ENCODE measurements at regions of chr5 and their contacts with region 1.

Region 1: GRCh38 chr5:88729084-88729828 is 153.7 kb downstream of the MEF2C start:
- DNase-seq: peak; percentile 45 to 55 (median 50)
- H3K4me3 ChIP-seq: no peak overlapping the region
- H3K4me3 Mint-ChIP-seq: no peak overlapping the region
- H3K27ac ChIP-seq: no peak overlapping the region
- H3K27ac Mint-ChIP-seq: no peak overlapping the region
- H3K4me1 ChIP-seq: no peaks in the 10 kb centered on the region
- H3K4me1 Mint-ChIP-seq: peaks cover 3 to 4% (median 4%) of the 10 kb centered on the region in 4 donors
- H3K27me3 ChIP-seq: no peaks in the 10 kb centered on the region
- H3K27me3 Mint-ChIP-seq: peaks cover 8 to 12% of the 10 kb centered on the region in 2 donors

Region 2: GRCh38 chr5:88656221-88656935 is 72.9 kb before region 1 on chr5:
- CTCF ChIA-PET with region 1: no interaction called
- POLR2A ChIA-PET with region 1: no interaction called
- intact Hi-C with region 1: no loop called
- DNase-seq: no peak
- H3K4me3 ChIP-seq: no peak overlapping the region
- H3K4me3 Mint-ChIP-seq: no peak overlapping the region
- H3K27ac ChIP-seq: no peak overlapping the region
- H3K27ac Mint-ChIP-seq: no peak overlapping the region
- H3K4me1 ChIP-seq: peaks cover 9% of the 10 kb centered on the region
- H3K4me1 Mint-ChIP-seq: peaks cover 5 to 16% (median 10%) of the 10 kb centered on the region in 4 donors
- H3K27me3 ChIP-seq: peaks cover 24% of the 10 kb centered on the region
- H3K27me3 Mint-ChIP-seq: peaks cover 29 to 30% of the 10 kb centered on the region in 2 donors

Region 3: GRCh38 chr5:88713818-88714217 is 15.4 kb before region 1 on chr5:
- CTCF ChIA-PET with region 1: interaction called, 12 read pairs
- POLR2A ChIA-PET with region 1: no interaction called
- intact Hi-C with region 1: no loop called
- DNase-seq: no peak
- H3K4me3 ChIP-seq: no peak overlapping the region
- H3K4me3 Mint-ChIP-seq: no peak overlapping the region
- H3K27ac ChIP-seq: no peak overlapping the region
- H3K27ac Mint-ChIP-seq: no peak overlapping the region
- H3K4me1 ChIP-seq: no peaks in the 10 kb centered on the region
- H3K4me1 Mint-ChIP-seq: no peaks in the 10 kb centered on the region
- H3K27me3 ChIP-seq: no peaks in the 10 kb centered on the region
- H3K27me3 Mint-ChIP-seq: peaks cover 7 to 12% of the 10 kb centered on the region in 2 donors

Region 4: GRCh38 chr5:88746438-88746882 is 17.2 kb after region 1 on chr5:
- CTCF ChIA-PET with region 1: interaction called, 63 read pairs
- POLR2A ChIA-PET with region 1: no interaction called
- intact Hi-C with region 1: no loop called
- DNase-seq: no peak
- H3K4me3 ChIP-seq: no peak overlapping the region
- H3K4me3 Mint-ChIP-seq: no peak overlapping the region
- H3K27ac ChIP-seq: no peak overlapping the region
- H3K27ac Mint-ChIP-seq: no peak overlapping the region
- H3K4me1 ChIP-seq: peaks cover 2% of the 10 kb centered on the region
- H3K4me1 Mint-ChIP-seq: peaks cover 2 to 4% (median 2%) of the 10 kb centered on the region in 4 donors
- H3K27me3 ChIP-seq: no peaks in the 10 kb centered on the region
- H3K27me3 Mint-ChIP-seq: peaks cover 1 to 4% of the 10 kb centered on the region in 2 donors

Region 5: DNA sequence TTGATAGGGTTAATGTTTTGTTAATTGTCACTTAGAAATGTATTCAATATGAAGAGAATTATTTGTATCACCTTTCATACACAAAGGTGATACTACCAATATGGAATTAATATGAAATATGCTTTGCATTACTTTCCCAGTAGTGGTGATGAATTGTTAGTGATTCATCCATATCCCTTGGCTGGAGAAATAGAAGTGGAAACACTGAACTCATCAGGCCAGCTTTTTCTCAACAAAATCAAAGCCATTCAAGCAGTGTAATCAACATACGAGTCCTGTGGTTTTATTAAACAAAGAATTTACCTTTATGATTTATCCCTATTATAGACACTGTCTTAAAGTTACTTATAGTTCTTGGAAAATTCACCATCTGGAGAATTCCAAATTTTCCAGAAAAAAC is 417.8 kb after region 1 on chr5:
- CTCF ChIA-PET with region 1: no interaction called
- POLR2A ChIA-PET with region 1: no interaction called
- intact Hi-C with region 1: no loop called
- DNase-seq: no peak
- H3K4me3 ChIP-seq: no peak overlapping the region
- H3K4me3 Mint-ChIP-seq: no peak overlapping the region
- H3K27ac ChIP-seq: no peak overlapping the region
- H3K27ac Mint-ChIP-seq: no peak overlapping the region
- H3K4me1 ChIP-seq: no peaks in the 10 kb centered on the region
- H3K4me1 Mint-ChIP-seq: no peaks in the 10 kb centered on the region
- H3K27me3 ChIP-seq: no peaks in the 10 kb centered on the region
- H3K27me3 Mint-ChIP-seq: no peaks in the 10 kb centered on the region

Region 6: DNA sequence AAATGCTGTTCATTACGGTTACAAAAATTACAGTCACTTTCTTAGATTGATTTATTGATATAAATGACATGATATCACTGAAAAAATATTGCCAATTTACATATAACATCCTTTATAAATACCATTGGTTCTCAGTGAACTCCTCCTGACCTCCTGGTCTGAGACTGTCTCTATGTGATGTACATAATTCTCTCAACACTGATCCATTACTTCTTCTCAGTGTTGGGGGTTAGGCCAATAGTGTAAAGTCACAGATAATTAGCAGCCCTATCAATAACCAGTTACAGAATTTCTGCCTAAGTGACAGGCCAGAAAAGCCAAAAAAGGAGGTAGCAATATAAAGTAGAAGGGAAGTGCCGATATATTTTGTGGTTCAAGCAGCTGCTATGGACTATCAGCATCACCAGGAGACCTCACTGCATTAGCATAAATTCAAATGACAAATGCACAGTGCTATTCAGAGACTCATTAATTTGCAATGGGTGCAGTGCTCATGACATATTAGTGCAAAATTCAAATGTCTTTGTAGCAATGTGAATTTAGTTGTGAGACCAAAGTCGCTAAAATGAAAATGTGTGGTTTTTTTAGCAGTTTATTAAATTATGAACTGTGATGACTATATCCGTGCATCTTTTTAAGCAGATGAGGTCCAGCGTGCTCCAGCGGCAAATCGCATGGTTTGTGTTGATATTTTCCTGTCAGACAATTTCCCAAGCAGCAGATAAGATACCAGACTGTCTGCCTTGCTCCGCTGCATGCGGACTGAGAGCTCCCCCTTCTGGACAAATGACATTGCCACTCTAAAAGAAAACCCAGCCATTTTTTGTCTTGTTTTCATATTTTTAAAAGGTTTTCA is 1535.7 kb after region 1 on chr5:
- CTCF ChIA-PET with region 1: interaction called, 39 read pairs
- POLR2A ChIA-PET with region 1: no interaction called
- intact Hi-C with region 1: no loop called
- DNase-seq: peak; percentile 19 to 44 (median 27)
- H3K4me3 ChIP-seq: no peak overlapping the region
- H3K4me3 Mint-ChIP-seq: peak overlapping the region in 1 of 8 donors; percentile 29
- H3K27ac ChIP-seq: no peak overlapping the region
- H3K27ac Mint-ChIP-seq: no peak overlapping the region
- H3K4me1 ChIP-seq: no peaks in the 10 kb centered on the region
- H3K4me1 Mint-ChIP-seq: peaks cover 0 to 2% (median under 1%) of the 10 kb centered on the region in 4 donors
- H3K27me3 ChIP-seq: no peaks in the 10 kb centered on the region
- H3K27me3 Mint-ChIP-seq: peaks cover 4 to 6% of the 10 kb centered on the region in 2 donors

Region 7: DNA sequence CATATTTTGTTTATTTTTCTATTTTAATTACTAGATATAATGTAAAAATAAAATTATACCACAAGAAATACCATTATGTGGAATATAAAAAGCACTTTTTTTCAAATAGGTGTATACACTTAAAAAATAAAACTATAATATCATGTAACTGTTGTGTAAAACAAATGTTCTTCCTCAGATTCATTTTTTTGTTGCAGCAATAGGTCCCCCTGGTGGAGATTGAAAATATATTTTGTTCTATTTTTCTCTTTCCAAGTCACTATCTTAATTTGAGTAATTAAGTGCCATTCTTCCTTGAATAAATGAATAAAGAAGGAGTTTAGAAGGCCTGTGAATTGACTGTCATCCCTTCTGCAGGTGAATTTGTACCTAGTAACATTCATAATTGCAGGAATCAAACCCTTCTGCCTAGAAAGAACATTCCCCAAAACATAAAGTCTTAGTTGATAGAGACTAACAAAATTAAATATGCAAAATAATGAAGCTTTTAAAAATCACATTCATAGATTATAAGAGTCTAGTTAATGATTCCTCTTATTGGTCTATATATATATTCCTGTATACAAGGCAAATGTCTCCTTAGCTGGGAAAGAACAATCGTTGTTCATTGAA is 1656.9 kb after region 1 on chr5:
- CTCF ChIA-PET with region 1: interaction called, 3 read pairs
- POLR2A ChIA-PET with region 1: no interaction called
- intact Hi-C with region 1: loop called (anchors 1 kb)
- DNase-seq: peak in 2 of 5 donors; percentile 1 to 12
- H3K4me3 ChIP-seq: no peak overlapping the region
- H3K4me3 Mint-ChIP-seq: no peak overlapping the region
- H3K27ac ChIP-seq: no peak overlapping the region
- H3K27ac Mint-ChIP-seq: no peak overlapping the region
- H3K4me1 ChIP-seq: no peaks in the 10 kb centered on the region
- H3K4me1 Mint-ChIP-seq: no peaks in the 10 kb centered on the region
- H3K27me3 ChIP-seq: no peaks in the 10 kb centered on the region
- H3K27me3 Mint-ChIP-seq: peaks cover 4% of the 10 kb centered on the region in 2 donors

Region 8: DNA sequence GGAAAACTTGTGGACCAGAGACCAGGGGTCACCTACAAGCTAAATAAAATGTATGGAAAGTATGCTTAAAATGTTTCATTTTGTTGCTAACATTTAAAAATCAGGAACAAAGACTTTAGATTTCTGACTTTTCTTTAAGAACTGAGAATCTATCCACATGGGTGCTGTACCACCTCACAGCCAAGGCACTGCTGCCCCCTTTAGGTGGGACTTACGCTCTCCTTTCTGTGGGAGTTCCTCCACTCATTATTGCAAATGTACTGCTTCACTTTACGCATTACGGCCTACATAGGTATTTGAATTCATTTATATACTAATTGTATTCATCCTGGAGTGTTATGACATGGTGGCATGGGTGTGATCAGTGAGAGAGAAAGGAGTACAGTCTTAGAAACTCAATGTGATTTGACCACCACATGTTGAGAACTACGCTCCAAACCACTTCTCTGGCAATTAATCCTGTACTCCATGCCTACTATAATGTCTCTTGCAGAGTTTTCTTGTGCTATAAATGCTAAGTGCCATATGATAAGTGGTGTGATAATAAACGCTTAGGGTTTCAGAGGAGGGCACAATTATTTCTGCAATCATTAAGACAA is 1705.0 kb after region 1 on chr5:
- CTCF ChIA-PET with region 1: interaction called, 10 read pairs
- POLR2A ChIA-PET with region 1: no interaction called
- intact Hi-C with region 1: loop called (anchors 1 kb)
- DNase-seq: peak in 4 of 5 donors; percentile 19 to 26 (median 22)
- H3K4me3 ChIP-seq: no peak overlapping the region
- H3K4me3 Mint-ChIP-seq: no peak overlapping the region
- H3K27ac ChIP-seq: no peak overlapping the region
- H3K27ac Mint-ChIP-seq: no peak overlapping the region
- H3K4me1 ChIP-seq: no peaks in the 10 kb centered on the region
- H3K4me1 Mint-ChIP-seq: no peaks in the 10 kb centered on the region
- H3K27me3 ChIP-seq: no peaks in the 10 kb centered on the region
- H3K27me3 Mint-ChIP-seq: peaks cover 7% of the 10 kb centered on the region in 2 donors

Region 9: DNA sequence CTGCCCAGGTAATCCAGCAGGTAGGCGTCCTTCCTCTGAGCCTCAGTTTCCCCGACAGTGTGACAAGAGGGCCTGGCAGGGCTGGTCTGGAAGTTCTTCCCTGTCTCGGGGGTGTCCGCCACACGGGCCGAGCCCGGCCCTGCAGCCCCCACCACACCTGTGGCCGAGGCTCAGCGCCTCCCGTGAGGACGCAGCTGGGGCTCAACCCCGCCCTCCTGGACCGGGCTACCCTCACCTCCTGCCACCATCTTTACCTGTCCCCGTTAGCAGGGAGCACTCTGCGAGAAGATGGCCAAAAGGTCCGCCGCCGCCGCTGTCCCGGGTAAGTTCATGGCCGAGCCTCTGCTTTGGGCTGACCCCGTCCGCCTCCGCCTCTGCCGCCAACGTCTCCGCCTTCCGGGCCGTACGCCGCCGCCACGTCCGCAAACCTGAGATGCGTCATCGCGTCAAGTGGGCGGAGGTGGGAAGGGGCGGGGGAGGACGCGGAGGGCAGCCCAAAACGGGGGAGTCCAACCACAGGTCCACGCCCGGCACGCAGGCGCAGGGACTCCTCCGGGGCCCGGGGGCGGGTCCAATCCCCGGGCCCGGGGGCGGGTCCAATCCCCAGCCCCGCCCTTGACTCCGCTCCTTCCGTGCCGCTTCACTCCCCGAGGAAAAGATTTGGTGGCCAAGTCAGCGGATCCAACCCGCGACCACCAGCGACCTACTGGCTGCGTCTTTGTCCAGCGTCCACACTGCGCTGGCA is 1800.1 kb after region 1 on chr5 and contains the start of gene LYSMD3:
- CTCF ChIA-PET with region 1: interaction called, 15 read pairs
- POLR2A ChIA-PET with region 1: no interaction called
- intact Hi-C with region 1: no loop called
- DNase-seq: peak; percentile 95 to 97 (median 96)
- H3K4me3 ChIP-seq: peak within 1 kb of the TSS; percentile 83 to 93
- H3K4me3 Mint-ChIP-seq: peak within 1 kb of the TSS; percentile 97 to 100 (median 99)
- H3K27ac ChIP-seq: peak within 1 kb of the TSS; percentile 98
- H3K27ac Mint-ChIP-seq: peak within 1 kb of the TSS; percentile 97 to 100 (median 99)
- H3K4me1 ChIP-seq: peaks cover 35% of the 10 kb centered on the region
- H3K4me1 Mint-ChIP-seq: peaks cover 25 to 42% (median 34%) of the 10 kb centered on the region in 4 donors
- H3K27me3 ChIP-seq: no peaks in the 10 kb centered on the region
- H3K27me3 Mint-ChIP-seq: peaks cover 9 to 12% of the 10 kb centered on the region in 2 donors
- total RNA-seq, gene LYSMD3: 30.1 to 30.9 TPM

Measured in CD4-positive, alpha-beta memory T cell (primary cell).